ENCODE measurements at regions of chr6 and their contacts with region 1.

Region 1: GRCh38 chr6:163180874-163181541 is 233.5 kb upstream of the QKI start:
- DNase-seq: peak; percentile 89
- H3K4me3 ChIP-seq: no peak overlapping the region
- H3K27ac ChIP-seq: no peak overlapping the region
- H3K4me1 ChIP-seq: peaks cover 14 to 24% (median 18%) of the 10 kb centered on the region in 4 donors
- H3K27me3 ChIP-seq: no peaks in the 10 kb centered on the region
- CTCF ChIP-seq: peak; percentile 55 to 75 (median 61)
- EP300 ChIP-seq: no peak
- POLR2A ChIP-seq: no peak

Region 2: GRCh38 chr6:163416557-163417253 is 235.7 kb after region 1 on chr6:
- intact Hi-C with region 1: loop called (anchors 5 kb)
- DNase-seq: no peak
- H3K4me3 ChIP-seq: peak overlapping the region; percentile 95 to 96 (median 96)
- H3K27ac ChIP-seq: peak overlapping the region; percentile 97 to 99 (median 99)
- H3K4me1 ChIP-seq: peaks cover 13 to 53% (median 47%) of the 10 kb centered on the region in 4 donors
- H3K27me3 ChIP-seq: no peaks in the 10 kb centered on the region
- CTCF ChIP-seq: peak; percentile 65 to 74 (median 71)
- EP300 ChIP-seq: no peak
- POLR2A ChIP-seq: no peak

Region 3: GRCh38 chr6:163565140-163565539 is 384.1 kb after region 1 on chr6:
- intact Hi-C with region 1: loop called (anchors 10 kb)
- DNase-seq: no peak
- H3K4me3 ChIP-seq: no peak overlapping the region
- H3K27ac ChIP-seq: no peak overlapping the region
- H3K4me1 ChIP-seq: peaks cover 5 to 36% (median 10%) of the 10 kb centered on the region in 4 donors
- H3K27me3 ChIP-seq: no peaks in the 10 kb centered on the region
- CTCF ChIP-seq: no peak
- EP300 ChIP-seq: no peak
- POLR2A ChIP-seq: no peak

Region 4: DNA sequence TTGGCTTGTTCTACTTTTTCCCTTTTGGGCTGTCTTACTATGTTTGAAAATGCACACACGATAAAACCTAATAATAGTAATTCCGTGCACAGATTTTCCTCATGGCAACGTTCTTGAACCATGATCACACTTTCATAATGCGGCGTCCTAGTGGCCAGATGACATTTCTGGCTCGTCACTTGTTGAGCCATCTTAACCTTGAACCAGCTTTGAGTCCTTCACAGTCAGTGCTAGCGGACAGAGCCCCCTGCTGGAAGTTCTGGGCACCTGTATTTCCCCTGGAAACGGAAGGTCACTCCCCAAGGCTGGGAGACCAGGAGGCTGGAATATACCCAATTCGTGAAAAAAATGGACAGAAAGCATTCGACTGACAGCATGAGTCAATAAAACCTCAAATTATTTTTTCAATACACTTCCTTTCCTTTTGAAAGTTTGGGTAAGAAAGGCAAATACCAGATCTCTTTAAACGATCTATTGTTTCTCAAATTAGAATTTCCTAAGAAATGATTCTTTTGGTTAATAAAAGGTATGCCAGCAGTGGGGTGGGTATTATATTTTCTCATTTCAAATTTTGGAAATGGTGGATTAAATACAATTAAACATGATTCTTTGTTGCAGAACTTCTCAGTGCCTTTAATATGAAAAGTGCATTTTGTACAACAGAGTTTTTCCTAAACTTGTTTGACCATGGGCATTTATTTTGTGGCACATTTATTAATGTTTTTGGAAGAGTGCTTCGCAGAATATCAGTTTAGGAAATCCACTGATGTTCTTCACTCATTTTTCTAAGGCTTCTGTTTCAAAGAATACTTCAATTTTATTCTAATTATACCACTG is 775.8 kb after region 1 on chr6:
- intact Hi-C with region 1: loop called (anchors 10 kb)
- DNase-seq: peak; percentile 93
- H3K4me3 ChIP-seq: no peak overlapping the region
- H3K27ac ChIP-seq: no peak overlapping the region
- H3K4me1 ChIP-seq: peaks cover 10 to 16% (median 14%) of the 10 kb centered on the region in 4 donors
- H3K27me3 ChIP-seq: no peaks in the 10 kb centered on the region
- CTCF ChIP-seq: peak; percentile 85 to 88 (median 86)
- EP300 ChIP-seq: no peak
- POLR2A ChIP-seq: no peak

Region 5: GRCh38 chr6:164927288-164928056 is 1746.5 kb after region 1 on chr6:
- intact Hi-C with region 1: loop called (anchors 5 kb)
- DNase-seq: no peak
- H3K4me3 ChIP-seq: peak overlapping the region in 1 of 4 donors; percentile 31
- H3K27ac ChIP-seq: no peak overlapping the region
- H3K4me1 ChIP-seq: peaks cover 0 to 19% (median 13%) of the 10 kb centered on the region in 4 donors
- H3K27me3 ChIP-seq: no peaks in the 10 kb centered on the region
- CTCF ChIP-seq: peak; percentile 85 to 100 (median 97)
- EP300 ChIP-seq: no peak
- POLR2A ChIP-seq: no peak